SK-N-SH (cell line): ENCODE measurements at regions of chr16 and their contacts with region 1.

Region 1: GRCh38 chr16:9008601-9009260 is 45.0 kb upstream of the USP7 start:
- DNase-seq: peak; percentile 94
- H3K4me3 ChIP-seq: peak overlapping the region in 1 of 2 experiments; percentile 52; a peak in 1 of 4 replicates
- H3K27ac ChIP-seq: no peak overlapping the region
- H3K4me1 ChIP-seq: peaks cover 0 to 3% of the 10 kb centered on the region in 2 experiments; a peak in 1 of 4 replicates
- H3K27me3 ChIP-seq: no peaks in the 10 kb centered on the region
- CTCF ChIP-seq: peak; percentile 81
- EP300 ChIP-seq: no peak
- RAD21 ChIP-seq: peak; percentile 89

Region 2: GRCh38 chr16:8885674-8886592 is 122.8 kb before region 1 on chr16:
- CTCF ChIA-PET with region 1: interaction called, 22 read pairs
- POLR2A ChIA-PET with region 1: no interaction called
- DNase-seq: peak; percentile 69
- H3K4me3 ChIP-seq: no peak overlapping the region
- H3K27ac ChIP-seq: peak overlapping the region; percentile 1 to 27; a peak in 2 of 4 replicates
- H3K4me1 ChIP-seq: peaks cover 9 to 32% of the 10 kb centered on the region in 2 experiments; a peak in 2 of 4 replicates
- H3K27me3 ChIP-seq: no peaks in the 10 kb centered on the region
- CTCF ChIP-seq: no peak
- EP300 ChIP-seq: no peak
- RAD21 ChIP-seq: no peak

Region 3: DNA sequence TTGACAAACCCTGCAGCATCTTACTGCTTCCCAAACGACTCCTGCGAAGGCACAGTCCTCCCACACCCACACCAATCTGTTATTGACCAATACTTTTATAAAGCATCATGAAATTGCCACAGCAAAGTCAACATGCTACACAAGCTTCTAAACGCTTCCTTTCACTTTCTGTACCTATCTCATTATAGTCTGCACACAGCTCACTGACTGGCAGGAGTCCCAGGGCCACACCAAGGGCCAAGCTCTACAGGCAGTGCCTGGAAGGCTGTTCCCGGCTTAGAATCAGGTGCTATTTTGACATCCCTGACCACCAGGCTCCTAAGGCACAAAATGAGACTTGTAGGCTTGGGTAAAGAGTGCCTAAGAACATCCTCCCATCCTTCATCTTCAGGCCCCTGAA is 84.5 kb before region 1 on chr16:
- CTCF ChIA-PET with region 1: interaction called, 10 read pairs
- POLR2A ChIA-PET with region 1: no interaction called
- DNase-seq: no peak
- H3K4me3 ChIP-seq: no peak overlapping the region
- H3K27ac ChIP-seq: no peak overlapping the region; a peak in 1 of 4 replicates
- H3K4me1 ChIP-seq: no peaks in the 10 kb centered on the region; a peak in 1 of 4 replicates
- H3K27me3 ChIP-seq: no peaks in the 10 kb centered on the region
- CTCF ChIP-seq: no peak
- EP300 ChIP-seq: no peak
- RAD21 ChIP-seq: no peak

Region 4: GRCh38 chr16:8943966-8944759 is 64.6 kb before region 1 on chr16:
- CTCF ChIA-PET with region 1: interaction called, 72 read pairs
- POLR2A ChIA-PET with region 1: no interaction called
- DNase-seq: no peak
- H3K4me3 ChIP-seq: no peak overlapping the region
- H3K27ac ChIP-seq: no peak overlapping the region
- H3K4me1 ChIP-seq: peaks cover 0 to 21% of the 10 kb centered on the region in 2 experiments; a peak in 1 of 4 replicates
- H3K27me3 ChIP-seq: no peaks in the 10 kb centered on the region
- CTCF ChIP-seq: no peak
- EP300 ChIP-seq: no peak
- RAD21 ChIP-seq: no peak

Region 5: DNA sequence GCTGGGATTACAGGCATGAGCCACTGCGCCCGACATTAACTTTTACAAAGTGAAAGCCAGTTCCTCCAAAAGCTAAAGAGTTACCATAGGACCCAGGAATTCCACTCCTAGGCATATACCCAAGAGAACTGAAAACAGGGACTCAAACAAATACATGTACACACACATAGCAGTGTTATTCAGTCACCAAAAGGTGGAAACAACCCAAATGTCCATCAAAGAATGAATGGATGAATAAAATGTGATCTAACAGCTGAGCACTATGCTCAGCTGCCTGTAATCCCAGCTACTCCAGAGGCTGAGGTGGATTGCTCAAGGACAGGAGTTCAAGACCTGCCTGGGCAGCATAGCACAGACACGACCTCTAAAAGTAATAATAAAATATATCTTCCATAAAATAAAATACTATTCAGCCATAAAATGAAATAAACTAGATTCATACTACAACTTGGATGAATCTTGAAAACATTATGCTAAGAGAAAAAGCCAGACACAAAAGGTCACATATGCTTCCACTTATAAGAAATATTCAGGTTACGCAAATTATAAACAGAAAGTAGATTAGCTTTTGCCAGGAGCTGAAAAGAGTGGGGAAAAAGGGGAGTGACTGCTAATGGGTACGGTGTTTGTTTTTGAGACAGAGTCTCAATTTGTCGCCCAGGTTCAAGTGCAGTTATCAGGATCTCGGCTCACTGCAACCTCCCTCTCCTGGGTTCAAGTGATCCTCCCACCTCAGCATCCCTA is 35.7 kb before region 1 on chr16:
- CTCF ChIA-PET with region 1: interaction called, 11 read pairs
- POLR2A ChIA-PET with region 1: no interaction called
- DNase-seq: no peak
- H3K4me3 ChIP-seq: no peak overlapping the region
- H3K27ac ChIP-seq: no peak overlapping the region
- H3K4me1 ChIP-seq: peaks cover 0 to 5% of the 10 kb centered on the region in 2 experiments; a peak in 1 of 4 replicates
- H3K27me3 ChIP-seq: no peaks in the 10 kb centered on the region
- CTCF ChIP-seq: no peak
- EP300 ChIP-seq: no peak
- RAD21 ChIP-seq: no peak

Region 6: GRCh38 chr16:8998114-8998513 is 10.6 kb before region 1 on chr16:
- CTCF ChIA-PET with region 1: interaction called, 28 read pairs
- POLR2A ChIA-PET with region 1: interaction called, 3 read pairs
- DNase-seq: no peak
- H3K4me3 ChIP-seq: no peak overlapping the region
- H3K27ac ChIP-seq: no peak overlapping the region
- H3K4me1 ChIP-seq: no peaks in the 10 kb centered on the region
- H3K27me3 ChIP-seq: no peaks in the 10 kb centered on the region
- CTCF ChIP-seq: no peak
- EP300 ChIP-seq: no peak
- RAD21 ChIP-seq: no peak

Region 7: GRCh38 chr16:9647981-9648712 is 639.4 kb after region 1 on chr16:
- CTCF ChIA-PET with region 1: no interaction called
- POLR2A ChIA-PET with region 1: no interaction called
- DNase-seq: peak; percentile 33
- H3K4me3 ChIP-seq: no peak overlapping the region
- H3K27ac ChIP-seq: no peak overlapping the region
- H3K4me1 ChIP-seq: no peaks in the 10 kb centered on the region
- H3K27me3 ChIP-seq: no peaks in the 10 kb centered on the region
- CTCF ChIP-seq: peak; percentile 45
- EP300 ChIP-seq: no peak
- RAD21 ChIP-seq: peak; percentile 67